Left ventricle myocardium superior (tissue), 1 donor: ENCODE measurements at regions of chr18 and their contacts with region 1.

Region 1: GRCh38 chr18:31424383-31424988 is 23.1 kb upstream of the DSG3 start:
- DNase-seq: no peak
- ATAC-seq: no peak

Region 2: GRCh38 chr18:31091350-31091749 is 333.1 kb before region 1 on chr18:
- intact Hi-C with region 1: no loop called
- DNase-seq: no peak
- ATAC-seq: peak; percentile 89

Region 3: GRCh38 chr18:31267823-31268481 is 156.5 kb before region 1 on chr18:
- intact Hi-C with region 1: loop called (anchors 10 kb)
- DNase-seq: no peak
- ATAC-seq: no peak